H1 (cell line): ENCODE measurements at regions of chr14 and their contacts with region 1.

Region 1: GRCh38 chr14:30005114-30005808 is 77.6 kb upstream of the PRKD1 start:
- DNase-seq: no peak
- H3K4me3 ChIP-seq: no peak overlapping the region
- H3K27ac ChIP-seq: no peak overlapping the region
- H3K4me1 ChIP-seq: no peaks in the 10 kb centered on the region
- H3K27me3 ChIP-seq: no peaks in the 10 kb centered on the region
- CTCF ChIP-seq: peak in 2 of 3 experiments; percentile 57 to 62; a peak in 3 of 4 replicates
- EP300 ChIP-seq: no peak
- POLR2A ChIP-seq: no peak
- RAD21 ChIP-seq: peak; percentile 87 to 88

Region 2: DNA sequence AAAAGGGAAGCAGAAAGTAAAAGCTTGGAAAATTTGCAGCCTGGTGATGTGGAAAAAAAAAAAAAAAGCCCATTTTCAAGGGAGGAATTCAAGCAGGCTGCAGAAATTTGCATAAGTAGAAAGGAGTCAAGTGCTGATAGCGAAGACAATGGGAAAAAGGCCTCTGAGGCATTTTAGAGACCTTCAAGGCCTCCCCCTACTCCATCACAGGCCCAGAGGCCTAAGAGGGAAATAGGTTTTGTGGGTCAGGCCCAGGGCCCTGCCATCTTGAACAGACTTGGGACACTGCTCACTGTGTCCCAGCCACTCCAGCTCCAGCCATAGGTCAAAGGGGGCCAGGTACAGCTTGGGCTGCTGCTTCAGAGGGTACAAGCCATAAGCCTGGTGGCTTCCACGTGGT is 63.9 kb before region 1 on chr14:
- CTCF ChIA-PET with region 1: no interaction called
- POLR2A ChIA-PET with region 1: no interaction called
- DNase-seq: no peak
- H3K4me3 ChIP-seq: no peak overlapping the region
- H3K27ac ChIP-seq: no peak overlapping the region
- H3K4me1 ChIP-seq: peaks cover 0 to 6% (median 4%) of the 10 kb centered on the region in 4 experiments; a peak in 3 of 7 replicates
- H3K27me3 ChIP-seq: peaks cover 0 to 9% (median 4%) of the 10 kb centered on the region in 4 experiments; a peak in 4 of 7 replicates
- CTCF ChIP-seq: no peak
- EP300 ChIP-seq: no peak
- POLR2A ChIP-seq: no peak
- RAD21 ChIP-seq: no peak

Region 3: GRCh38 chr14:30045720-30046119 is 40.5 kb after region 1 on chr14:
- CTCF ChIA-PET with region 1: no interaction called
- POLR2A ChIA-PET with region 1: no interaction called
- DNase-seq: no peak
- H3K4me3 ChIP-seq: no peak overlapping the region
- H3K27ac ChIP-seq: no peak overlapping the region
- H3K4me1 ChIP-seq: no peaks in the 10 kb centered on the region
- H3K27me3 ChIP-seq: no peaks in the 10 kb centered on the region
- CTCF ChIP-seq: no peak
- EP300 ChIP-seq: no peak
- POLR2A ChIP-seq: no peak
- RAD21 ChIP-seq: no peak

Region 4: DNA sequence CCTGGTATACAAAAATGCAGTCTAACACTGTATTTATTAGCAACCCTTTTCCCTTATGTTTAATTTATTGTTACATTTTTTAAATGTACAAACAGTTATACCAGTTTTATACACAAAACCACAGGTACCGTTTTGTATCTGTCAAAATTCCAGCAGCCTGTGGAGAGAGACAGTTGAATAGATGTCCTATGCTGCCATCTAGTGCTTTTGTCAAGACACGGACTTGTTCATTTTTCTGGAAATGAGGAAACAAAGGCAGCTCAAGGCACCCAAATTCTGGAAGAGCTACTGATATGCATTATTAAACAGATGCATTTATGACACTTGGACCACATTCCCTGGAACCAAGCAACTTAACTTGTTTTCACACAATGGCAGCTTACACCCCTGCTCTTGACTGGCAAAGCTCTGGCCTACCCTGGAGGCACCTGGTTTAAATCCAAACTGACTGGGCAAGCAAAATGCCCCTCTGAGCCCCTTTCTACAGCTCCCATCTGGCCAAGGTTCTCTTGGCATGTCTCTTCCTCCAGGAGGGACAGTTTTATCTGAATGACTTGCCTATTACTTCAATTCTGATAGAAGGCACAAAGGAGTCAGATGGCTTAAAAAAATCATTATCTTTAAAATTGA is 209.3 kb after region 1 on chr14:
- CTCF ChIA-PET with region 1: interaction called, 13 read pairs
- POLR2A ChIA-PET with region 1: no interaction called
- DNase-seq: no peak
- H3K4me3 ChIP-seq: no peak overlapping the region
- H3K27ac ChIP-seq: no peak overlapping the region
- H3K4me1 ChIP-seq: no peaks in the 10 kb centered on the region
- H3K27me3 ChIP-seq: no peaks in the 10 kb centered on the region
- CTCF ChIP-seq: peak in 2 of 3 experiments; percentile 63 to 71; a peak in 3 of 4 replicates
- EP300 ChIP-seq: no peak
- POLR2A ChIP-seq: no peak
- RAD21 ChIP-seq: peak; percentile 91 to 93